ENCODE measurements at regions of chr11 and their contacts with region 1.

Region 1: DNA sequence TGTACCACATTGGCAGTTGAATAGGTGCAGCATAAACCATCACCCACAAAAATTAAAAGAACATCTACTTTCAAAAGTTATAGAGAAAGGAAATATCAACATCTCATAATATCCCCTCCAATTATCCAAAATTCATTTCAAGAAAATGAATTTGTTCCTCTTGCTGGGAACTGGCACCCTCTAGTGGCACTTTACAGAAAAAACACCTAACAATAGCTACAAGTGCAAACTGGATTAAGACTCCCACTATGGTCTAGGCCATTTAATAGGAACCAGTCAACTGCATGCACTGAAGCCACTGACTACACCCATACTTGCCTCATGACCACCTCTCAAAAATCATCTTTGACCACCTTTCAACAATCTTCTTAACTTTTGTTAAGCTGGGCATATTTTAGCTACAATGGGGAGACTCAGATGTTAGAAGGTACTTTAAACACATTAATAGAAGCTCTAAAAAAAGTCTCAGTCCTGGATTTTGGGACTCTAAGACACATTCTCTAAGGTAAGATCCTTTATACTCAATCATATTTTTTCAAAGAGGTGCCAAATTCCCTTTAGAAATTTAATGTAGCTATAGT is 17.3 kb downstream of the TRAF6 start:
- DNase-seq: peak; percentile 57
- ATAC-seq: peak; percentile 47
- H3K4me3 Mint-ChIP-seq: no peak overlapping the region
- H3K27ac Mint-ChIP-seq: no peak overlapping the region
- H3K4me1 Mint-ChIP-seq: peaks cover 19% of the 10 kb centered on the region
- H3K27me3 Mint-ChIP-seq: no peaks in the 10 kb centered on the region

Region 2: GRCh38 chr11:36265793-36266628 is 226.8 kb before region 1 on chr11:
- CTCF ChIA-PET with region 1: interaction called, 14 read pairs
- POLR2A ChIA-PET with region 1: no interaction called
- DNase-seq: peak; percentile 63
- ATAC-seq: peak; percentile 74
- H3K4me3 Mint-ChIP-seq: no peak overlapping the region
- H3K27ac Mint-ChIP-seq: no peak overlapping the region
- H3K4me1 Mint-ChIP-seq: no peaks in the 10 kb centered on the region
- H3K27me3 Mint-ChIP-seq: no peaks in the 10 kb centered on the region

Region 3: GRCh38 chr11:36300651-36301050 is 192.2 kb before region 1 on chr11:
- CTCF ChIA-PET with region 1: interaction called, 178 read pairs
- POLR2A ChIA-PET with region 1: no interaction called
- DNase-seq: no peak
- ATAC-seq: no peak
- H3K4me3 Mint-ChIP-seq: no peak overlapping the region
- H3K27ac Mint-ChIP-seq: no peak overlapping the region
- H3K4me1 Mint-ChIP-seq: no peaks in the 10 kb centered on the region
- H3K27me3 Mint-ChIP-seq: peaks cover 15% of the 10 kb centered on the region

Region 4: GRCh38 chr11:36316049-36316772 is 176.6 kb before region 1 on chr11:
- CTCF ChIA-PET with region 1: interaction called, 10 read pairs
- POLR2A ChIA-PET with region 1: no interaction called
- DNase-seq: no peak
- ATAC-seq: no peak
- H3K4me3 Mint-ChIP-seq: no peak overlapping the region
- H3K27ac Mint-ChIP-seq: no peak overlapping the region
- H3K4me1 Mint-ChIP-seq: no peaks in the 10 kb centered on the region
- H3K27me3 Mint-ChIP-seq: peaks cover 44% of the 10 kb centered on the region

Region 5: GRCh38 chr11:36363361-36364268 is 129.2 kb before region 1 on chr11:
- CTCF ChIA-PET with region 1: interaction called, 14 read pairs
- POLR2A ChIA-PET with region 1: no interaction called
- DNase-seq: no peak
- ATAC-seq: no peak
- H3K4me3 Mint-ChIP-seq: no peak overlapping the region
- H3K27ac Mint-ChIP-seq: no peak overlapping the region
- H3K4me1 Mint-ChIP-seq: peaks cover 32% of the 10 kb centered on the region
- H3K27me3 Mint-ChIP-seq: peaks cover 47% of the 10 kb centered on the region

Region 6: GRCh38 chr11:36450110-36450572 is 42.7 kb before region 1 on chr11:
- CTCF ChIA-PET with region 1: interaction called, 12 read pairs
- POLR2A ChIA-PET with region 1: interaction called, 3 read pairs
- DNase-seq: no peak
- ATAC-seq: no peak
- H3K4me3 Mint-ChIP-seq: peak overlapping the region; percentile 35
- H3K27ac Mint-ChIP-seq: peak overlapping the region; percentile 65
- H3K4me1 Mint-ChIP-seq: peaks cover 46% of the 10 kb centered on the region
- H3K27me3 Mint-ChIP-seq: peaks cover 5% of the 10 kb centered on the region

Region 7: GRCh38 chr11:36509694-36510566 is 17.1 kb after region 1 on chr11 and contains the start of gene TRAF6:
- CTCF ChIA-PET with region 1: interaction called, 52 read pairs
- POLR2A ChIA-PET with region 1: no interaction called
- DNase-seq: peak; percentile 91
- ATAC-seq: peak; percentile 97
- H3K4me3 Mint-ChIP-seq: peak within 1 kb of the TSS; percentile 98
- H3K27ac Mint-ChIP-seq: peak within 1 kb of the TSS; percentile 92
- H3K4me1 Mint-ChIP-seq: peaks cover 32% of the 10 kb centered on the region
- H3K27me3 Mint-ChIP-seq: peaks cover 9% of the 10 kb centered on the region
- total RNA-seq, gene TRAF6: 8.8 to 9.1 TPM

Region 8: GRCh38 chr11:36622431-36623136 is 129.8 kb after region 1 on chr11:
- CTCF ChIA-PET with region 1: no interaction called
- POLR2A ChIA-PET with region 1: no interaction called
- DNase-seq: no peak
- ATAC-seq: no peak
- H3K4me3 Mint-ChIP-seq: no peak overlapping the region
- H3K27ac Mint-ChIP-seq: no peak overlapping the region
- H3K4me1 Mint-ChIP-seq: no peaks in the 10 kb centered on the region
- H3K27me3 Mint-ChIP-seq: peaks cover 18% of the 10 kb centered on the region

Measured in activated CD8-positive, alpha-beta T cell treated with anti-CD3 and anti-CD28 coated beads, Interleukin-2, amount 10 ng/mL, durations not matched to agents 7 days and 5 days (primary cell).